CD14-positive monocyte (primary cell): ENCODE measurements at regions of chr5 and their contacts with region 1.

Region 1: GRCh38 chr5:180126726-180127681 is 55.4 kb upstream of the RNF130 start:
- DNase-seq: peak; percentile 14 to 46 (median 20)
- H3K4me3 ChIP-seq: no peak overlapping the region
- H3K4me3 Mint-ChIP-seq: no peak overlapping the region
- H3K27ac ChIP-seq: no peak overlapping the region
- H3K27ac Mint-ChIP-seq: no peak overlapping the region
- H3K4me1 ChIP-seq: no peaks in the 10 kb centered on the region
- H3K4me1 Mint-ChIP-seq: peaks cover 3% of the 10 kb centered on the region
- H3K27me3 ChIP-seq: peaks cover 0 to 5% of the 10 kb centered on the region in 2 donors
- H3K27me3 Mint-ChIP-seq: peaks cover 19 to 32% (median 22%) of the 10 kb centered on the region in 3 donors
- CTCF ChIP-seq: peak; percentile 99

Region 2: GRCh38 chr5:179818746-179819295 is 308.2 kb before region 1 on chr5:
- intact Hi-C with region 1: no loop called
- DNase-seq: peak; percentile 96 to 99 (median 99)
- H3K4me3 ChIP-seq: peak overlapping the region in 2 of 3 experiments; percentile 35 to 99
- H3K4me3 Mint-ChIP-seq: peak overlapping the region; percentile 78 to 82
- H3K27ac ChIP-seq: peak overlapping the region; percentile 90 to 98
- H3K27ac Mint-ChIP-seq: peak overlapping the region; percentile 89 to 96 (median 95)
- H3K4me1 ChIP-seq: peaks cover 51 to 63% of the 10 kb centered on the region in 2 donors
- H3K4me1 Mint-ChIP-seq: peaks cover 49% of the 10 kb centered on the region
- H3K27me3 ChIP-seq: no peaks in the 10 kb centered on the region
- H3K27me3 Mint-ChIP-seq: peaks cover 9 to 18% (median 18%) of the 10 kb centered on the region in 3 donors
- CTCF ChIP-seq: no peak

Region 3: DNA sequence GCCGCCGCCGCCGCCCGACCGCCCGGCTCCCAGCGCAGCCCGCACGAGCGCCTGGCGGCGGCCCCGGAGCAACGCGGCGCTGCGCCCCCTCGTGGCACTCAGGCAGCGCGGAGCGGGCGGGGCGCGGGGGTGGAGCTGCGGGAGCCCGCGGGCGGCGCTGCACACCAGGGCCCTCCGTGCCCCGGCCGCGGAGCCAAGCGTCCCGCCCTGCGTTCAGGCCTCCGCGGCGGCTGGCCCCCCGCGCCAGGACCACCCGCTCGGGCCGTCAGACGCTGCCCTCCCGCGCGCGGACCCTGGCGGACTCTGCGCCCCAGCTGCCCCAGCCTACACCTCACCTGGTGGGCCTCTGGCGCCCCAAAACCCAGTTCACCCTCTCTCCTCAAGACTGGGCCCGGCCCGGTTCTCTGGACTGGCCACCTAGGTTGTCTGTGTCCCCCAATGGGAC is 82.2 kb after region 1 on chr5 and contains the start of gene RASGEF1C:
- intact Hi-C with region 1: loop called (anchors 2 to 5 kb)
- DNase-seq: peak; percentile 49 to 73 (median 61)
- H3K4me3 ChIP-seq: peak within 1 kb of the TSS in 2 of 3 experiments; percentile 28 to 47
- H3K4me3 Mint-ChIP-seq: peak within 1 kb of the TSS; percentile 72 to 92
- H3K27ac ChIP-seq: no peak within 1 kb of the TSS
- H3K27ac Mint-ChIP-seq: peak within 1 kb of the TSS in 1 of 7 donors; percentile 72
- H3K4me1 ChIP-seq: peaks cover 5 to 10% of the 10 kb centered on the region in 2 donors
- H3K4me1 Mint-ChIP-seq: peaks cover 8% of the 10 kb centered on the region
- H3K27me3 ChIP-seq: peaks cover 5 to 29% of the 10 kb centered on the region in 2 donors
- H3K27me3 Mint-ChIP-seq: peaks cover 26 to 64% (median 44%) of the 10 kb centered on the region in 3 donors
- CTCF ChIP-seq: peak; percentile 31
- polyA plus RNA-seq, gene RASGEF1C: not detected

Region 4: DNA sequence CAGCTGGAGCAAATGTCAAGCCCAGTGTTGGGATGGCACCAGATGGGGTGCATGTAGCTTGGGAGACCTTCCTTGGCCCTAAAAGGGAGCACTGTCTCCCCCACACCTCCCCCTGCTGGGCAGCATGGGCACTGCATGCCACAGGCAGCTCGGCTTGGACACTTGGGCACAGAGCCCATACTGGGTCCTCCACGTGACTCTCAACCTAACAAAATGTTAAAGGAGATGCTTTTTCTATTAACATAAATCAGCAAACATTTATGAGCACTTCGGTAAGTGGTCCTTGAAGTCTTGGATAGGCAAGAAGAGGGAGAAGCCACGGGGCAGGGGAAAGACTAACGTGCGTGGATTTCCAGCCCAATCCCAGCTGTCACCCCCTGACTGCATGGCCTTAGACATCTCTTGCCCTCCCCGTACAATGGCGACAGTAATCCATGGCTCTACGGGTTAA is 188.8 kb after region 1 on chr5:
- intact Hi-C with region 1: loop called in 1 of 2 experiments (anchors 5 kb)
- DNase-seq: peak; percentile 50 to 64 (median 61)
- H3K4me3 ChIP-seq: no peak overlapping the region
- H3K4me3 Mint-ChIP-seq: no peak overlapping the region
- H3K27ac ChIP-seq: no peak overlapping the region
- H3K27ac Mint-ChIP-seq: no peak overlapping the region
- H3K4me1 ChIP-seq: no peaks in the 10 kb centered on the region
- H3K4me1 Mint-ChIP-seq: no peaks in the 10 kb centered on the region
- H3K27me3 ChIP-seq: no peaks in the 10 kb centered on the region
- H3K27me3 Mint-ChIP-seq: peaks cover 2 to 7% (median 4%) of the 10 kb centered on the region in 3 donors
- CTCF ChIP-seq: peak; percentile 99

Region 5: DNA sequence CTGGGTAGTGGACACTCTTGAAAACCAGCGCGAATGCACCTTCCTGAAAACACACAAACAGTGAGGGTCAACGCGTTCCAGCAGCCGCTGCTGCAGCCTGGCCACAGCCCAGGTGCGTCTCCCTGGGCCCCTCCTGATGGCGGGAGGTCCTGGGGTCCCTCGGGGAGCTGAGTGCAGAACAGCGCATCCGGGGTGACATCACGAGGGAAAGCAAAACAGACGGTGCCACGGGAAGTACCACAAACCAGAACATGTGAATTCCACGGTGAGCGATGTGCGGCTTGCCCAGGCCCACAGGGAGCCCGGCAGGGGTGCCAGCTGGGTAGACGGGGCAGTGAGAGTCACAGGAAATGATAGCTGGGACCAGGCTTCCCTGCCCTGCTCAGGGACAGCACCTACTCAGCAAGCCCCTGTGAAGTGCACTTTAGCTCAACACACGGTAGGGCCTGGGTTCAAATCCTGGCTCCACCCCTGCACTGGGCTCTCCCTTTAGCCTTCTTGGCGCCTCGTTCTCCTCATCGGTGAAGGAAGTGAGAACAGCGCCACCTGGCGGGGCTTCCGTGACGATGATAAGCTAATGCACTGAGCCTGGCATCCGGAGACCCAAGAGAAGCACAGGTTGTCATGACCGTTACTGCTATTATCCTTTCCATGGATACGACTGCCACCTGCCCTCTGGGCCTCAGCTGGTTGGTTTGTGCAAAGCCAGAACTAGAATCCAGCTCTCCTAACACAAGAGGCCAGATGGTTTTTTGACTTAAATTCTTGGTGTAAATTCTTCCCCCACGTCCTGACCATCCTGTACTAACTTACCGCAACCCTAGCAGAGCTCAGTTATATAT is 201.5 kb after region 1 on chr5:
- intact Hi-C with region 1: loop called (anchors 2 to 5 kb)
- DNase-seq: peak; percentile 65 to 83 (median 75)
- H3K4me3 ChIP-seq: no peak overlapping the region
- H3K4me3 Mint-ChIP-seq: no peak overlapping the region
- H3K27ac ChIP-seq: no peak overlapping the region
- H3K27ac Mint-ChIP-seq: no peak overlapping the region
- H3K4me1 ChIP-seq: no peaks in the 10 kb centered on the region
- H3K4me1 Mint-ChIP-seq: no peaks in the 10 kb centered on the region
- H3K27me3 ChIP-seq: peaks cover 0 to 6% of the 10 kb centered on the region in 2 donors
- H3K27me3 Mint-ChIP-seq: peaks cover 23 to 38% (median 23%) of the 10 kb centered on the region in 3 donors
- CTCF ChIP-seq: peak; percentile 95